Activated naive CD4-positive, alpha-beta T cell treated with anti-CD3 and anti-CD28 coated beads for 36 hours (primary cell): ENCODE measurements at regions of chr5 and their contacts with region 1.

Region 1: DNA sequence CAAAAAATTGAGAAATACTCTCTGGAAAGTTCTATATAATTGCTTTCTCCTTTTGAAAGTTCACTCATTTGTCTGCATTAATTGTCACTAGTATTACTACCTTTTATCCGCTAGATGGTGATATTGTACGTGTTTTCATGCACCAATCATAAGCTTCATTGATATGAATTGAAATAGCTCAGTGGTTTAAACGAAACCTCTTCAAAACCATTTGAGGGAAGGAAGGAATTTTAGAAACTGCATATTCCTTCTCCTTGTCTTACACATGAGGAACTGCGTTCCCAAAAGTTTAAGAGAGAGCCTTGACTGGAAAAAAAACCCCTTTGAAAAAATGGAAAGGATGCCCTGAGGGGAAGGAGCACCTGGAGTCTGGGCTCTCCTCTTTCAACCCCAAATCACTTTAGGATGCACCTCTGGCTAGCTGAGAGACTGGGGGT is 98.6 kb downstream of the YTHDC2 start:
- DNase-seq: no peak
- H3K4me3 Mint-ChIP-seq: no peak overlapping the region
- H3K27ac Mint-ChIP-seq: no peak overlapping the region
- H3K4me1 Mint-ChIP-seq: peaks cover 3% of the 10 kb centered on the region
- H3K27me3 Mint-ChIP-seq: peaks cover 4% of the 10 kb centered on the region

Region 2: GRCh38 chr5:113663880-113664541 is 51.9 kb after region 1 on chr5:
- CTCF ChIA-PET with region 1: interaction called, 13 read pairs
- intact Hi-C with region 1: loop called (anchors 1 kb)
- DNase-seq: peak; percentile 40
- H3K4me3 Mint-ChIP-seq: no peak overlapping the region
- H3K27ac Mint-ChIP-seq: no peak overlapping the region
- H3K4me1 Mint-ChIP-seq: no peaks in the 10 kb centered on the region
- H3K27me3 Mint-ChIP-seq: peaks cover 24% of the 10 kb centered on the region

Region 3: DNA sequence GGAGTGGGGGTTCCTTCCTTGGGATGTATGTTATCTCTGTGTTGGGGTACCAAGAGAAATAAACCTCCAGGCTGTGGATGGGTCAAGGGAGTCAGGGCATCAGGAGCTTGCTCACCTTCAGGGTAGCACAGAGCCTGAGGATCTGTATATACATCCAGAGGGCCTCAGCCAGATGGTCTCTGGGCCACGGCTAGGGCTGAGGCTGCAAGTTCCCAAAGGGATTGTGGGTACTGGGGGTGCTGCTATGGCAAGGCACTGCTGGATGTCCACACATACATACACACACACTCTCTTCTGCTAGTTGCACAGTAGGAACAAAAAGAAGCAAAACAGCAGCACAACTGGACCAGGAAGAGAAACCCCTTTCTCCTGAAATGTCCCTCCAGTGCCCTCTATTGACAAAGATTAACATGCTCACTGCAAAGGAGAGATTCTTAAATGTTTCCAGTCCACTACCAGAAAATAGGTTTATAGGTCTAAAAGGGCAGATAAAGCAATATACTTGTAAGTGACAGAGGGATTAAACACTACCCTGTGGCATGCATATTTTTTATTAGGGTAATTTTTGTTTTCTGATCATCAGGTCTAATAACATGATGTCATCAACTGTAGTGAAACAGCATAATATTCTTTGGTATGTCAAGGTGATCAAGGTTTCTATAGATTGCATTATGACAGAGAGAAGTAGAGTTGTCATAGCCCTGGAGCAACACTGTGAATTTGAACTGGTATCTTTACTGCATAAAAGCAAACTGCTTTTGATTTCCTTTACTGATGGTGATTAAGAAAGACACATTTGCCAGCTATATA is 693.5 kb after region 1 on chr5:
- CTCF ChIA-PET with region 1: no interaction called
- intact Hi-C with region 1: loop called (anchors 10 kb)
- DNase-seq: no peak
- H3K4me3 Mint-ChIP-seq: no peak overlapping the region
- H3K27ac Mint-ChIP-seq: no peak overlapping the region
- H3K4me1 Mint-ChIP-seq: no peaks in the 10 kb centered on the region
- H3K27me3 Mint-ChIP-seq: no peaks in the 10 kb centered on the region

Region 4: DNA sequence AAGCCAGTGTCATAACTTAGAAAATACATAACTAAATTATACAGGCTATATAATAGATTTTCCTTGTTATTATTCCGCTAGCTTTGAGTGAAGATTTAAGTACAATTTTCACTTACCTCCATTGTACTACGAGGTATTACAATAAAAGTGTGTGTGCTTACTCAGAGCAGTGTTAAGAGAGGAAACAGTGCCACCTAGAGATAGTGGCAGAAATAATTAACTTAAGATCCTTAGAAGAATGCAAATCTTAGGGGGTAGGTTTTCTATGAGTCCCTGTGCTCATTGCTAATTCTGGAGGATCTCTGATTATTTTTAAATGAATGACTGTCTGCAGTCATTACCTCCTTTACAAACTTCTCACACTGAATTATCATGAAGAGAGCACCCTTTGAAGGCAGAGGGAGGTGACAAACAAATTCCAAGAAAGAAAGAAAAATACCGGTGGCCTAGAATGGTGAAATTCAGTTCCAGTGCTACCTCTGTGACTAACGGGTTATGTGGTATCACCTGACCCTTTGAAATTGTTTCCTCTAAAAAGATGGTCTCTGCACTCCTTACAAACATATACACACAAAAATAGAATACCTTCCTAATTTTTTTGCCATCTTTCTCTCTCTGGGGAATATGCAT is 1177.8 kb after region 1 on chr5:
- CTCF ChIA-PET with region 1: no interaction called
- intact Hi-C with region 1: loop called (anchors 1 kb)
- DNase-seq: no peak
- H3K4me3 Mint-ChIP-seq: no peak overlapping the region
- H3K27ac Mint-ChIP-seq: no peak overlapping the region
- H3K4me1 Mint-ChIP-seq: no peaks in the 10 kb centered on the region
- H3K27me3 Mint-ChIP-seq: no peaks in the 10 kb centered on the region

Region 5: GRCh38 chr5:115246361-115246991 is 1634.4 kb after region 1 on chr5:
- CTCF ChIA-PET with region 1: no interaction called
- intact Hi-C with region 1: loop called (anchors 10 kb)
- DNase-seq: no peak
- H3K4me3 Mint-ChIP-seq: no peak overlapping the region
- H3K27ac Mint-ChIP-seq: no peak overlapping the region
- H3K4me1 Mint-ChIP-seq: peaks cover 25% of the 10 kb centered on the region
- H3K27me3 Mint-ChIP-seq: no peaks in the 10 kb centered on the region